Naive thymus-derived CD4-positive, alpha-beta T cell (primary cell): ENCODE measurements at regions of chr14 and their contacts with region 1.

Region 1: DNA sequence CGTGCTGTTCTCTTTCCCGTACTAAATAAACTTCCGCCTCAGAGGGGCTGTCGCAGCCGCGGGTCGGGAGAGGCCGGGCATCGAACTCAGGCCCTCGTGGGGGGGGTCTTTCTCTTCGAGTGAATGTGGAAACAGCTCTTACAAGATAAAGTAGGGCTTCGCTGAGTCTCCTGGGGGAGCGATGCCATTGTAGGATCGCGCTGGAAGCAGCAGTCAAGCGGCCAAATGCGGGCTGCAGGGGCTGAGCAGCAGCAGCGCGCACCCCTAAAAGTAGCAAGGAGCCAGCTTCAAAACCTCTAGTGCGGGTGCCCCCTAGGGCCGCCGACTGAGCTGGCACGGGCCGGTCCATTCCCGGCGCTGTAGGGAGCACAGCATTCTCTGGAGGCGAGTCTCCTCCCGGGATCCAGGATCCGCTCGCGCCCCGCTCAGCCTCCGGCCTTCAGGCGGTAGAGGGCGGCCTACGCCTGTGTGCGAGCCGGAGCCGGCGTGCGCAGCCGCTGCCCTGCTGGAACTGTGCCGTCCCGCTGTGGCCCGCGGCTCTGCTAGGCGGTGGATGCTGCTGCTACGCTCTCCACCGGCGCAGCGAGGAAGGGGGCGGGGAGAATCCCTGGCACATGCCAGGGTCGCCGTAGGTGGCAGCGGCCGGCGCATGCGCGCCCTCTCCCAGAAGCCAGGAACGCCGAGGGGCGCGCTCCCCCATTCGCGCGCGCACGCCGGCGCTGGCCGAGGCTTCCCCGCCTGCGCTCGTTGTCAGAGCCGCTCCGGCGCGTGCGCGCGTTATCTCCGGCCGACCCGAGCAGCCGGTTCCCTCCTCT is at the start of gene FUT8:
- DNase-seq: peak; percentile 90 to 97 (median 95)
- ATAC-seq: peak; percentile 93
- H3K4me3 ChIP-seq: peak within 1 kb of the TSS; percentile 92
- H3K4me3 Mint-ChIP-seq: peak within 1 kb of the TSS; percentile 85 to 99 (median 97)
- H3K27ac ChIP-seq: peak within 1 kb of the TSS; percentile 86
- H3K27ac Mint-ChIP-seq: peak within 1 kb of the TSS; percentile 93 to 99 (median 96)
- H3K4me1 ChIP-seq: peaks cover 0 to 14% of the 10 kb centered on the region in 2 donors
- H3K4me1 Mint-ChIP-seq: peaks cover 23 to 52% (median 48%) of the 10 kb centered on the region in 7 donors
- H3K27me3 ChIP-seq: no peaks in the 10 kb centered on the region
- H3K27me3 Mint-ChIP-seq: no peaks in the 10 kb centered on the region
- total RNA-seq, gene FUT8: 38.4 to 107 (median 43.4) TPM

Region 2: GRCh38 chr14:64855721-64856528 is 556.3 kb before region 1 on chr14:
- CTCF ChIA-PET with region 1: no interaction called
- POLR2A ChIA-PET with region 1: no interaction called
- intact Hi-C with region 1: no loop called
- DNase-seq: no peak
- ATAC-seq: no peak
- H3K4me3 ChIP-seq: no peak overlapping the region
- H3K4me3 Mint-ChIP-seq: no peak overlapping the region
- H3K27ac ChIP-seq: no peak overlapping the region
- H3K27ac Mint-ChIP-seq: no peak overlapping the region
- H3K4me1 ChIP-seq: no peaks in the 10 kb centered on the region
- H3K4me1 Mint-ChIP-seq: peaks cover 0 to 1% (median 0%) of the 10 kb centered on the region in 7 donors
- H3K27me3 ChIP-seq: no peaks in the 10 kb centered on the region
- H3K27me3 Mint-ChIP-seq: peaks cover 5 to 39% (median 24%) of the 10 kb centered on the region in 5 donors

Region 3: DNA sequence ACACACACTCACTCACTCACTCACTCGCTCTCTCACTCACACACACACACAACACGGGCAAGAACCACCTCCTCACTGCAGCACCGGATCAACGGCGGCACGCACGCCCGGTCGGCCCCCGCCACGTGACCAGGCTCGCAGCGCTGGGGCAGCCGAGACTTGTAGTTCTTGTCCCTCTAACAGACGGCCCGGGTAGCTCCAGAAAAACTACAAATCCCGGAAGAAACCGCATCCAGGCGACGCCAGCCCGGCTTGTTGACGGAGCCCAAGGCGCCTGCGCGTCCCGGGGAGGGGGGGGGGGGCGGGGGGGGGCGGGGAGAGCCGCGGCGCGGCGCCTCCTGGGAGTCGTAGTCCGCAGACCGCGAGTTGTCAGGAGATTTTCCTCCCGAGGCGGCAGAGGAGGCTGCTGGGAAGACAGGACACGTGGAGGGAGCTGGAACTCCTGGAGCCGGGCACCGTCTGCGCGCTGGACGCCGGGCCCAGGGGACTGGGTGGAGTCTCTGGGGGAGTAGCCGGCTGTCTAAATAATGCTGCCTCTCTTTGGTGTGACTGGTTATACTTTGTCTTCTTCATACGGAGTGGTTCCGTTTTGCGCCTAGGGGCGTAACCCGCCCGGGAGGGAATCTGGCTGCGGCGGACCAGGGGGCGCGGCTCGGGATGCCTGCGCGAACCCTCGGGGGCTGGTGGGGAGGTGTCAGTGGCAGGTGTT is 309.6 kb before region 1 on chr14 and contains the start of gene MAX:
- CTCF ChIA-PET with region 1: no interaction called
- POLR2A ChIA-PET with region 1: interaction called, 10 read pairs
- intact Hi-C with region 1: loop called (anchors 1 to 2 kb)
- DNase-seq: peak; percentile 88 to 100 (median 99)
- ATAC-seq: peak; percentile 95
- H3K4me3 ChIP-seq: peak within 1 kb of the TSS; percentile 96
- H3K4me3 Mint-ChIP-seq: peak within 1 kb of the TSS; percentile 87 to 97 (median 91)
- H3K27ac ChIP-seq: peak within 1 kb of the TSS; percentile 100
- H3K27ac Mint-ChIP-seq: peak within 1 kb of the TSS; percentile 91 to 99 (median 94)
- H3K4me1 ChIP-seq: peaks cover 17 to 34% of the 10 kb centered on the region in 2 donors
- H3K4me1 Mint-ChIP-seq: peaks cover 28 to 43% (median 42%) of the 10 kb centered on the region in 7 donors
- H3K27me3 ChIP-seq: no peaks in the 10 kb centered on the region
- H3K27me3 Mint-ChIP-seq: peaks cover 0 to 12% (median 0%) of the 10 kb centered on the region in 5 donors
- total RNA-seq, gene MAX: 164 to 236 (median 202) TPM

Region 4: GRCh38 chr14:65287264-65288131 is 124.7 kb before region 1 on chr14:
- CTCF ChIA-PET with region 1: interaction called, 8 read pairs
- POLR2A ChIA-PET with region 1: interaction called, 44 read pairs
- intact Hi-C with region 1: loop called (anchors 1 kb)
- DNase-seq: peak in 8 of 9 donors; percentile 51 to 80 (median 75)
- ATAC-seq: peak; percentile 84
- H3K4me3 ChIP-seq: peak overlapping the region; percentile 27
- H3K4me3 Mint-ChIP-seq: peak overlapping the region; percentile 75 to 91 (median 85)
- H3K27ac ChIP-seq: peak overlapping the region; percentile 69
- H3K27ac Mint-ChIP-seq: peak overlapping the region; percentile 90 to 100 (median 98)
- H3K4me1 ChIP-seq: peaks cover 49 to 59% of the 10 kb centered on the region in 2 donors
- H3K4me1 Mint-ChIP-seq: peaks cover 51 to 90% (median 77%) of the 10 kb centered on the region in 7 donors
- H3K27me3 ChIP-seq: no peaks in the 10 kb centered on the region
- H3K27me3 Mint-ChIP-seq: no peaks in the 10 kb centered on the region

Region 5: DNA sequence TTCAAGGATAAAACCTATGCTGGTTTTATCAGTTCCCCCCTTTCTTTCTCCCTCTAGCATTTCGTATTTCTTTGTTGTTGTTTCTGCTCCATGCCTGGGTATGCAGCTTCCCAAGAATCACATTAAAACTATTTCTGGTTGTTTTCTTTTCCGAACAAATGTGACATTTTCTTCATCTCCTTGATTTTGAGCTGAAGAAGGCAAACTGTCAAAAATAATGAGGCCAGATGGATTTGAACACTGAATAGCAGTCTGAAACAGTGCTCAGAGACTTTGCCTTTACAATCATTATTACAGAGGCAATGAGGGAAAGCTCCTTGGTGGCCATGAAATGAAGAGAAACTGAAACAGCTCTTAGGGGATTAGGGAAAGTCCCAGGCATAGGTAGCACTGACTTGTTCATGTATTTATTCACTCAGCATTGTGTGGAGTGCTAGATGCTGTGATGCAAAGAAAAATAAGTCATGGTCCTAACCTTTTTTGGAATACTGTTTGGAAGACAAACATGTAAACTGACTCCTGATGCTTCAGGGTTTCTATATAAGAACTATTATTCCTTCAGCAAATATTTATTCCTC is 319.8 kb after region 1 on chr14:
- CTCF ChIA-PET with region 1: no interaction called
- POLR2A ChIA-PET with region 1: no interaction called
- intact Hi-C with region 1: loop called in 1 of 2 experiments (anchors 10 kb)
- DNase-seq: no peak
- ATAC-seq: peak; percentile 51
- H3K4me3 ChIP-seq: no peak overlapping the region
- H3K4me3 Mint-ChIP-seq: peak overlapping the region in 1 of 10 donors; percentile 74
- H3K27ac ChIP-seq: no peak overlapping the region
- H3K27ac Mint-ChIP-seq: peak overlapping the region in 4 of 9 donors; percentile 50 to 88 (median 71)
- H3K4me1 ChIP-seq: no peaks in the 10 kb centered on the region
- H3K4me1 Mint-ChIP-seq: peaks cover 4 to 15% (median 9%) of the 10 kb centered on the region in 7 donors
- H3K27me3 ChIP-seq: no peaks in the 10 kb centered on the region
- H3K27me3 Mint-ChIP-seq: no peaks in the 10 kb centered on the region

Region 6: GRCh38 chr14:65958664-65959562 is 546.7 kb after region 1 on chr14:
- CTCF ChIA-PET with region 1: interaction called, 60 read pairs
- POLR2A ChIA-PET with region 1: interaction called, 3 read pairs
- intact Hi-C with region 1: loop called (anchors 1 kb)
- DNase-seq: peak in 6 of 9 donors; percentile 15 to 52 (median 42)
- ATAC-seq: peak; percentile 66
- H3K4me3 ChIP-seq: no peak overlapping the region
- H3K4me3 Mint-ChIP-seq: peak overlapping the region in 1 of 10 donors; percentile 50
- H3K27ac ChIP-seq: no peak overlapping the region
- H3K27ac Mint-ChIP-seq: peak overlapping the region in 6 of 9 donors; percentile 3 to 80 (median 39)
- H3K4me1 ChIP-seq: peaks cover 12 to 14% of the 10 kb centered on the region in 2 donors
- H3K4me1 Mint-ChIP-seq: peaks cover 0 to 47% (median 20%) of the 10 kb centered on the region in 7 donors
- H3K27me3 ChIP-seq: no peaks in the 10 kb centered on the region
- H3K27me3 Mint-ChIP-seq: peaks cover 0 to 17% (median 0%) of the 10 kb centered on the region in 5 donors

Region 7: DNA sequence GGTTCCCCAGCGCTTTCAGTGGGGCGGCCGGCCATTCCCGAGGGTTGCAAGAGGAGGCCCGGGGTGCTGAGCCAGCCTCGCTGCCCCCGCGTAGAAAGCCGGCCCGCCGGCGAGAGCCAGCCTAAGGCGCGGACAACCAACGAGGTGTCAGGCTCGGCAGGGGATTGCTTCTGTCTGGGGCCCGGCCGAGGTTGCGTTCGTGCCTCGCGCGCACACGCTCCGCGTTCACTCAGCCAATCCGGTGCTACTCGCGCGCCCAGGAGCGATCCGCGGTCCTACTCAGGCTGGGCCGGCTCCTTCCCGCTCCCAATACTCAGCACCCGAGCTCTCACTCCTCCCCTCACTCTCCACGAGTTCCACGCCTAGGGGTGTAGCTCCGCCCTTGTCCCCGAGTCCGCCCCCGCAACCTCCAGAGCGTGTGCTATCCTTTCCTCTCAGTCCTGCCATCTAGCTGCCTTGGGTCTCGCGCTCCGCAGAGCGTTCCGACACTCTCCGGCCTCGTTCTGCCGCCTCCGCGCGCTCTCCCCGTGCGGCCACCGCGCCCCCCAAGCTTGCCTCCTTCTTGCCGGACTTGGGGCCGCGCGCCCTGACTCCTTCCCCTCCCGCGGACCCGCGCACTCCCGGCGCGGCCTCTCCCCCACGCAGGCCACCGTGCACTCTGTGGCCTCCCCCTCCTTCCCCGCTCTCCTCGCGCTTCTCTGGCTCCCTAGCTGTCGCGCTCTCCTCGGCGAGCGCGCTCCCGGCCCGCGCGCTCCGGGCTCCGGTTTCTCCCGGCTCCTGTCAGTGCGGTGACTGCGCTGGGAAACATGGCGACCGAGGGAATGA is 1095.7 kb after region 1 on chr14 and contains the start of gene GPHN:
- CTCF ChIA-PET with region 1: no interaction called
- POLR2A ChIA-PET with region 1: no interaction called
- intact Hi-C with region 1: loop called (anchors 2 to 5 kb)
- DNase-seq: peak; percentile 62 to 87 (median 82)
- ATAC-seq: peak; percentile 93
- H3K4me3 ChIP-seq: peak within 1 kb of the TSS; percentile 78
- H3K4me3 Mint-ChIP-seq: peak within 1 kb of the TSS; percentile 94 to 100 (median 99)
- H3K27ac ChIP-seq: peak within 1 kb of the TSS; percentile 70
- H3K27ac Mint-ChIP-seq: peak within 1 kb of the TSS; percentile 71 to 96 (median 91)
- H3K4me1 ChIP-seq: peaks cover 6 to 7% of the 10 kb centered on the region in 2 donors
- H3K4me1 Mint-ChIP-seq: peaks cover 16 to 42% (median 34%) of the 10 kb centered on the region in 7 donors
- H3K27me3 ChIP-seq: no peaks in the 10 kb centered on the region
- H3K27me3 Mint-ChIP-seq: peaks cover 0 to 29% (median 0%) of the 10 kb centered on the region in 5 donors
- total RNA-seq, gene GPHN: 11.8 to 28.1 (median 14.8) TPM